WTC11 (cell line): ENCODE measurements at regions of chr5 and their contacts with region 1.

Region 1: DNA sequence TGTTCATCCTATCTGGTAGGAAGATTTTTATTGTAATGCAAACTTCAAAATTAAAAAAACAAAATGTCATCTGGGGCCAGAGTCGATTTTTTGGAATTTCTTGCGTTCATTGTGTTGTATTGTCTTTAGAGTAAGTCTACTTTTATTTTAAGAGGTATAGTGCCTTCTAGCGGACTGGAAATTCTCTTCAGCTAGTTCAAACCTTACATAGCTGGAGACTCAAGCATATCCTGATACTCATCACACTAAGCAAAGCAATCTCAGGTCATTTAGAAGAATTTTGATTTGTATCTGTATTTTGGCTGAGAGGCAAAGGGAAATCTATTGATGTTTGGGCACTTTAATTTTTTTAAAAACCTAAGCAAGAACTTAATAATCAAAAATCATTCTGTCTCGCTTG is 366.4 kb downstream of the TRIM36 start:
- DNase-seq: no peak
- ATAC-seq: peak; percentile 67
- H3K4me3 Mint-ChIP-seq: no peak overlapping the region
- H3K27ac Mint-ChIP-seq: no peak overlapping the region
- H3K4me1 Mint-ChIP-seq: peaks cover 11% of the 10 kb centered on the region
- H3K27me3 Mint-ChIP-seq: no peaks in the 10 kb centered on the region
- CTCF ChIP-seq: no peak

Region 2: GRCh38 chr5:114782869-114783268 is 20.5 kb before region 1 on chr5:
- CTCF ChIA-PET with region 1: interaction called, 15 read pairs
- POLR2A ChIA-PET with region 1: no interaction called
- DNase-seq: peak; percentile 57
- ATAC-seq: peak; percentile 98
- H3K4me3 Mint-ChIP-seq: no peak overlapping the region
- H3K27ac Mint-ChIP-seq: no peak overlapping the region
- H3K4me1 Mint-ChIP-seq: no peaks in the 10 kb centered on the region
- H3K27me3 Mint-ChIP-seq: no peaks in the 10 kb centered on the region
- CTCF ChIP-seq: no peak

Region 3: GRCh38 chr5:115069087-115069968 is 266.0 kb after region 1 on chr5:
- CTCF ChIA-PET with region 1: interaction called, 11 read pairs
- POLR2A ChIA-PET with region 1: no interaction called
- DNase-seq: peak; percentile 46
- ATAC-seq: peak; percentile 78
- H3K4me3 Mint-ChIP-seq: no peak overlapping the region
- H3K27ac Mint-ChIP-seq: no peak overlapping the region; the same call in 1 of the 2 replicates
- H3K4me1 Mint-ChIP-seq: peaks cover 50% of the 10 kb centered on the region
- H3K27me3 Mint-ChIP-seq: no peaks in the 10 kb centered on the region
- CTCF ChIP-seq: peak; percentile 50; the same call in 1 of the 2 replicates